Left cardiac atrium (tissue), 4 donors: ENCODE measurements at regions of chr15 and their contacts with region 1.

Region 1: DNA sequence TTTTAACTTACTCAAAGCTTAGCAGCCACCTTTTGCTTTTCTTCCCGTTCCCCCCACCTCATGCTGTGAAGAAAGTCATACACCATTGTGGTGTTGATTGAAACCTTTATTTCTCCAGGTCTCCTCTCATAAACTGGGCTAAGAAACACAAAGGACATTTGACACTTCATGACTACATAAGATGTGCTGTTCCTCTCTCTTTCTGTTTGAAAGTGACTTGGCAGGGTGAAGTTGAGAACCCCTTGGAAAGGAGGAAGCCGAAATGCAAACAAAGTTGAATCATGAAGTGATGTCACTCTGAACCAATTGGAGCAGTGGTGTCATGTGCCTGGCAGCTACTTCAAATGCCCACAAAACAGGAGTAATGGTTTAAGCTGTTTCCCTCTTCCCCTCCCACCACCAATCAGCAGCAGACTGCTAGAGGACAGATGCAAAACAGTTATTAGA is 174.7 kb downstream of the IGF1R start:
- DNase-seq: no peak
- ATAC-seq: peak in 1 of 2 donors; percentile 69

Region 2: GRCh38 chr15:98745650-98746622 is 77.1 kb before region 1 on chr15:
- intact Hi-C with region 1: no loop called
- DNase-seq: no peak
- ATAC-seq: peak in 1 of 2 donors; percentile 64

Region 3: DNA sequence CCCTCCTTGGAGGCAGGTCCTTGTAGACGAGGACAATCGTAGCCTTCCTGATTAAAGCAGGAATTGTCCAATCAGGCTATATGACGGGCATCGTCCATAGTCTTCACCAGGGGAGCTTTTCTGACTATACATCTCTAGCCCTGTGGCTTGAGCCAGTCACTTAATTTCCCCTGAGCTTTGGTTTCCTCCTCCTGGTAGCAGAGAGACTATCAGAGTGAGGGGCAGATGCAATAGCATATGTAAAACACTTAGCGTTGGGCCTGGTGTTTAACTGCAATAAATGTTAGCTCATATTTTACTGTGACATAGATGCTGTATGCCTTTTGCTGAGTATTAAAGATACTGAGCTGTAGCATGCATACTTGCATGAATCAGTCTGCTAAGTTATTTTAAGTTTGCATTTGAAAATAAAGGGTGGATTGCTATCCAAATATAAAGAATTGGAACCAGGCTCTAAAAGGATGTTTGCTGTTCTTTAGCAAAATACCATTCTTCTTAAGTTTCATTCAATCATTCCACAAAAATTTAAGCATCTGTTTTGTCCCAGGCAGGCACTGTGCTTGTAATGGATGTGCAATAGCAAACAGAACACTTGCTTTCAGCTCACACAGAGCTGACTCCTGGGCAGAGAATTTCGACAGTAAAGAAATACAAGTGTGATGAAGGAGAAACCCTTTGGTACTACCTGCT is 33.3 kb after region 1 on chr15:
- intact Hi-C with region 1: loop called in 1 of 2 experiments (anchors 5 kb)
- DNase-seq: no peak
- ATAC-seq: no peak